Caco-2 (cell line): ENCODE measurements at regions of chr7 and their contacts with region 1.

Region 1: DNA sequence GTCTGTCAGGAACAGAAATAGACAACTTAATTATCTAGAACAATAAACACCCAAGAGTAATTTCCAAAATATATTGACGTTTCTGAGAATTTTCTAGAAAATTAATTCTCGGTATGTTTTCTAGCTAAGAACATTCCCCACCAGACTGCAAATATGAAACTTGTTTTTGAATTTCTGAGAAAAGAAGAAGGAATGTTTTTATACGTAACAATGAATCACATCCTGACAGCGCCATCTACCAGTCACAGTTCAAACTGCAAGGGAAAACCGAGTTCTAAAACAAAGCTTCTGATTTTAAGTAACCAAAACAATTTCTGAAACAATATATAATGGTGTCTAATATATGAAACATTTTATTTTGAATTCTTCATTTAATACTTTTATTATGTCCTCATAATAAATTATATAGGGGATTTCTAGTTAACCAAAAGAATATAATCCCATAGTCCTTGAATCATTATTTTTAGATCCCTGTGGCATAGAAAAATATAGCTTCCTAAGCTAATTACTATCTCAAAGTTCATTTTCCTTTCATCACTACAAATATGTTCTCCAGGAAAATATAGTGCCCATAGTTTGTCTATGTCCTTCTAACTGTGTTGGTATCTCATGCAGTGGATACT is 34.5 kb upstream of the MEOX2 start:
- DNase-seq: peak in 1 of 2 experiments; percentile 43
- H3K4me3 ChIP-seq: no peak overlapping the region
- H3K4me3 Mint-ChIP-seq: no peak overlapping the region
- H3K27ac Mint-ChIP-seq: no peak overlapping the region
- H3K4me1 ChIP-seq: peaks cover 9% of the 10 kb centered on the region
- H3K4me1 Mint-ChIP-seq: no peaks in the 10 kb centered on the region
- H3K27me3 ChIP-seq: no peaks in the 10 kb centered on the region
- H3K27me3 Mint-ChIP-seq: no peaks in the 10 kb centered on the region
- CTCF ChIP-seq: peak; percentile 73 to 80

Region 2: GRCh38 chr7:15305002-15305600 is 415.9 kb before region 1 on chr7:
- CTCF ChIA-PET with region 1: no interaction called
- POLR2A ChIA-PET with region 1: no interaction called
- intact Hi-C with region 1: loop called (anchors 5 kb)
- DNase-seq: peak; percentile 49 to 69
- H3K4me3 ChIP-seq: no peak overlapping the region
- H3K4me3 Mint-ChIP-seq: no peak overlapping the region
- H3K27ac Mint-ChIP-seq: no peak overlapping the region
- H3K4me1 ChIP-seq: no peaks in the 10 kb centered on the region
- H3K4me1 Mint-ChIP-seq: no peaks in the 10 kb centered on the region
- H3K27me3 ChIP-seq: no peaks in the 10 kb centered on the region
- H3K27me3 Mint-ChIP-seq: no peaks in the 10 kb centered on the region
- CTCF ChIP-seq: peak; percentile 73 to 85

Region 3: DNA sequence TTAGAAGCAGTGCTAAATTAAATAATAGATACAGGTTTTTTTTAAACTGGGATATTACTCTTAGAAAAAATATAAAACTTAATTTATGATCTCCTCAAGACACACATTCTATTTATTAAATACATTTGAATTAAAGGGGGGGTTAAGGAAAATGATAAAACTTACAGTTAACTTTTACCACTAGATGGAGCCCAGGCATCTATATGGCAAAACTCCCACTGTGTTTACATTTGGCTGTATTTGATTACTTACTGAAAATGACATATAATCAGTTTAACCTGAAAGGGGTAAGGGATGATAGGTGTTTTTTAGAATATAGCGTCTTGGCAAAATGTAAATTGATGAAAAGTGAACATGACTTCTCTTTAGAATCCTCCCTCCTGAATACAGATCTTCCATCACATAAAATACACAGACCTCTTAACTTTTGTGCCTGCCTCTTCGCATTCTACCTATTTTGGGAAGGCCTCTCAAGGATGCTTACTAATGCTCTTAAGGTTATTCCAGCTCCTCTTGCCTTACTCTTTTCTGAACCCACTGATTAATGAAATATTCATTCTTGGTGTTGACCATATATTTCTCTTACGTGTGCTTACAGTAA is 394.8 kb before region 1 on chr7:
- CTCF ChIA-PET with region 1: no interaction called
- POLR2A ChIA-PET with region 1: no interaction called
- intact Hi-C with region 1: loop called (anchors 1 kb)
- DNase-seq: peak in 1 of 2 experiments; percentile 19
- H3K4me3 ChIP-seq: no peak overlapping the region
- H3K4me3 Mint-ChIP-seq: no peak overlapping the region
- H3K27ac Mint-ChIP-seq: no peak overlapping the region
- H3K4me1 ChIP-seq: no peaks in the 10 kb centered on the region
- H3K4me1 Mint-ChIP-seq: peaks cover 5% of the 10 kb centered on the region
- H3K27me3 ChIP-seq: no peaks in the 10 kb centered on the region
- H3K27me3 Mint-ChIP-seq: peaks cover 4% of the 10 kb centered on the region
- CTCF ChIP-seq: peak; percentile 53 to 59

Region 4: DNA sequence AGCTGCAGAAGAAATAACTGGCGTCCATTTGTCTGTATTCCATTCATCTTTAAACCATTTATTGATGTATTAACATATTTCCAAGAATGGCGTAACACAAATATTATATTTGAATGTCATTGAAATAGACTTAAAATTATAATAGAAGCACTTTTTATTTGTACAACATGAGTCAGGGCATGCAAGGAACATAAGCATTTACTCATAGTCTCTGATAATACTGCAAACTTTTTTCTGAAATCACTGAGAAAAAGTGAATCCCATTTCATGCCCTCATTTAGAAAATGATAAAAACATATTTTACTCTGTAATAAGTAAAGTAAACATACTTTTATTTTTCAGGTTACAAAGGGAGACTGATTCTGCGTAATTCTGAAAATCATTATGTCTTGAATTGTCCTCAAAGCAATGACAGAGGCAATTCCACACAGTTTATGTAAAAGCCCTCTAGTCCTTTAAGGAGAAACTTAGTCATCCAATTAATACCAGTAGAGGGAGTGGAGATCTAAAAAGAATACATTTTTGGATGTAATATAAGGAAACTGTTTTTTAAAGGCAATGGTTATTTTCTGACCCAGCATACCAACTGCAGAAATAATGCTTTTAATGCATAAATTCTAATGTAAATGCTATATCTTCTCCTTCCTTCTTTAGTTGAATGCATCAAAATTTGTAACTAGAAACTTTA is 217.2 kb before region 1 on chr7:
- CTCF ChIA-PET with region 1: no interaction called
- POLR2A ChIA-PET with region 1: no interaction called
- intact Hi-C with region 1: loop called (anchors 5 kb)
- DNase-seq: no peak
- H3K4me3 ChIP-seq: no peak overlapping the region
- H3K4me3 Mint-ChIP-seq: no peak overlapping the region
- H3K27ac Mint-ChIP-seq: no peak overlapping the region
- H3K4me1 ChIP-seq: no peaks in the 10 kb centered on the region
- H3K4me1 Mint-ChIP-seq: no peaks in the 10 kb centered on the region
- H3K27me3 ChIP-seq: no peaks in the 10 kb centered on the region
- H3K27me3 Mint-ChIP-seq: no peaks in the 10 kb centered on the region
- CTCF ChIP-seq: no peak

Region 5: DNA sequence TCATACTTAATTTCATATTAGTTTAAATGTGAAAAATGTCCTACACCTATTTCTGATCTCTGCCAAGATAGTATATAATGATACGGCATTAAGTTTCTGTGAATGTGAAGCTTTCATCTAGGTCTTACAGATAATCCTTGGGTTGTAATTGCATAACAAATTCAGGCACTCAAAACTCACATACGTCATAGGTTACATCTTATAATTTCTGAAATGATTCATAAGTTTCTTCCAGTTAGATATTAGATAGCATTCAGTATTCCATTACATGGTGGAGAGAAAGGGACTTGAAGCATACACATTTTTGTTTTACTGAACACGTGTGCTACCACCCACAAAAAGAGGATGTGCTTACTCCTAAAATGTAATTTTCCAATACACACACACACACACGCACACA is 83.8 kb before region 1 on chr7:
- CTCF ChIA-PET with region 1: no interaction called
- POLR2A ChIA-PET with region 1: no interaction called
- intact Hi-C with region 1: loop called (anchors 5 kb)
- DNase-seq: no peak
- H3K4me3 ChIP-seq: no peak overlapping the region
- H3K4me3 Mint-ChIP-seq: no peak overlapping the region
- H3K27ac Mint-ChIP-seq: no peak overlapping the region
- H3K4me1 ChIP-seq: no peaks in the 10 kb centered on the region
- H3K4me1 Mint-ChIP-seq: no peaks in the 10 kb centered on the region
- H3K27me3 ChIP-seq: no peaks in the 10 kb centered on the region
- H3K27me3 Mint-ChIP-seq: no peaks in the 10 kb centered on the region
- CTCF ChIP-seq: no peak

Region 6: DNA sequence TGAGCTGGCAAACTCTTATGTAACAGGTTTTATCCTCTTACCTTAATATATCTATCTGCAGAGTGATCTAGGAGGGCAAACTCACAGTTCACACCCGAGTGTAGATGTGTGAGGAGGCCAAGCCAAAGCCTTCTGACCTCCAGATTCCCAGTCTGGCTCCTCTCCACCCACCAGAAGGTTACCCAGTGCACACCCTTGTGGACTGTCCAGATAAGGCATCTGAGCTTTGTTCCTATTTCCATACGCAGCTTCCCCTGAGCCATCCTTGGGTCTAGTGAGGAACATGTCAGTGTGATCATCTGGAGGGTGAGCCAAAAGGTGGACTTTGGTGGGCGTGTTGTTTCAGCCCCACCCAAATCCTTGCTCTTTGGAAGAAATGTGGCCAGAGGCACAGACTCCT is 168.5 kb after region 1 on chr7:
- CTCF ChIA-PET with region 1: interaction called, 4 read pairs
- POLR2A ChIA-PET with region 1: no interaction called
- intact Hi-C with region 1: loop called (anchors 5 kb)
- DNase-seq: peak; percentile 63 to 71
- H3K4me3 ChIP-seq: no peak overlapping the region
- H3K4me3 Mint-ChIP-seq: no peak overlapping the region
- H3K27ac Mint-ChIP-seq: no peak overlapping the region
- H3K4me1 ChIP-seq: peaks cover 7% of the 10 kb centered on the region; the same call in 1 of the 2 replicates
- H3K4me1 Mint-ChIP-seq: no peaks in the 10 kb centered on the region
- H3K27me3 ChIP-seq: no peaks in the 10 kb centered on the region
- H3K27me3 Mint-ChIP-seq: no peaks in the 10 kb centered on the region
- CTCF ChIP-seq: peak; percentile 46 to 63